ENCODE measurements at regions of chr2 and their contacts with region 1.

Region 1: GRCh38 chr2:69306822-69307578 is 80.0 kb downstream of the GFPT1 start:
- DNase-seq: peak; percentile 85 to 89 (median 87)
- ATAC-seq: peak; percentile 74
- H3K4me3 ChIP-seq: no peak overlapping the region
- H3K4me1 ChIP-seq: peaks cover 28% of the 10 kb centered on the region
- CTCF ChIP-seq: peak; percentile 51

Region 2: DNA sequence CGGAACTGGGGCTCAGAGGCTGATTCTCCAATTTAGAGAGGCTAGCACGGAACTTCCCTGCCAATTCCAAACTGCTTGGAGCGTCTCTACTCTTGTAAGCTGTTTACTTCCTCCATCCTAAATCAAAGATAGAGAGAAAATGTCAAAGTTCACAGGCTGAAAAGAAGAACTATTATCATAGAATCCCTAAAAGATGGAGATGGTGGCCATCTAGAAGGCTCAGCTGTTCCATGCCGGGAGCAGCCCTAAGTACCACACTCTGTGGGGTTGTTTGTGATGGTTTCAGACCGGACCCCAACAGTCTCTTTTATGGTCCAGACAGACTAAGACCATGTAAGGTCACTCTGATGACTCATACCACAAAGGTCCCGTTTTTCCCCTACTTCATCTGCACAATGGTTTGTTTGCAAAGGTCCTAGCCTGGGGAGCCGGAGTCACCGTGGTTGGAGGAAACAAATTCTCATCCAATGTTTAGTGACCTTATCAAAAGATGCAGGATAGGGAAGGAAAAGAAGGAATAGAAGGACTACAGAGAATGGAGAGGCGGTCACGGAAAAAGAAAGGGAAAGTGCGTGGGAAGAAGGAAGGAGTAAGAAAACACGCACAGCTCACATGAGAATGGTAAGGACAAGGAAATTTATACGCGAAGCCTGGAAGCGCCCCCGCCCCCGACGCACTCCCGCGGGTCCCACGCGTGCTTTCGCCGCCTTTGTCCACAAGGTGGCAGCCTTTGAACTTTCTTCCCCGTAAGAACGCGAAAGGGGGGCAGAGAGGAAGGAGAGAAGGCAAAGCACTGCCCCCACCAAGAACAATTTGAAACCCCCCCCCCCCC is 294.5 kb before region 1 on chr2:
- intact Hi-C with region 1: loop called in 1 of 2 experiments (anchors 5 kb)
- DNase-seq: peak; percentile 55 to 74 (median 70)
- ATAC-seq: peak; percentile 61
- H3K4me3 ChIP-seq: no peak overlapping the region
- H3K4me1 ChIP-seq: peaks cover 5% of the 10 kb centered on the region
- CTCF ChIP-seq: peak; percentile 38

Region 3: DNA sequence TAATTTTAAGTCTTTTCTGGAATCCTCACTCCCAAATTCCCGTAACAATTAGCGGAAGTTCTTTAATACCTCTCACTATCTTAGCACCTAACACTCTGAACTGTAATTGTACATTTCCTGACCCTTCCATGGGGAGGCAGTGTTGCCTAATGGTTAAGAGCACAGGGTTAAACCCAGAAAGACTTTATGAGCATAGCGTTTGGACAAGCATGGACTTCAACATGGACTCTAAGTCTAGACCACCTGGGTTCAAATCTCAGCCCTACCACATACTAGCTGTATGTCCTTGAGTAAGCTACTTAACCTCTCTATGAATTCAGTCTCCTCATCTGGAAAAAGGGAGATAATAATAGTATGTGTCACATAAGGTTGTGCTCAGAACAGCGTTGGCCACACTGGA is 281.0 kb before region 1 on chr2:
- intact Hi-C with region 1: loop called in 1 of 2 experiments (anchors 5 kb)
- DNase-seq: peak in 1 of 3 donors; percentile 74
- ATAC-seq: peak; percentile 86
- H3K4me3 ChIP-seq: no peak overlapping the region
- H3K4me1 ChIP-seq: peaks cover 4% of the 10 kb centered on the region
- CTCF ChIP-seq: peak; percentile 50

Region 4: GRCh38 chr2:69242651-69243051 is 64.3 kb before region 1 on chr2:
- intact Hi-C with region 1: loop called in 1 of 2 experiments (anchors 10 kb)
- DNase-seq: no peak
- ATAC-seq: peak; percentile 60
- H3K4me3 ChIP-seq: no peak overlapping the region
- H3K4me1 ChIP-seq: no peaks in the 10 kb centered on the region
- CTCF ChIP-seq: no peak

Region 5: DNA sequence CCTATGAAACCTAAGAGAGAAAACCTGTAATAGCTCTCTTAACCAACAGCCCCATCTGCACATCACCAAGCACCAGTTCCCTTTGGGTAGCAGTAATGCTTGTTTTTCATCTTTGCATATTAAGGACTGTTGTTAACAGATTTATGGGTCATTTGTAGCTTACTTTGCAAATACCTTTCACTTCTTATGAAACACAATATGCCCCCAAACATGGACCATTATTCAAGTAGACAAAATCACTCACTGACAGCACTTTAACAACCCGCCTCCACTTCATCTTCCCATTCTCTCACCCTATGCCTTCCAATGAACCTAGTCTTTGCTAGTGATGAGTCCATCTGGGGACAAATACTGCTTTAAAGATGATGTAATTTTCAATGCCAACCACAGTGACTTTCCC is 15.6 kb after region 1 on chr2:
- intact Hi-C with region 1: no loop called
- DNase-seq: no peak
- ATAC-seq: no peak
- H3K4me3 ChIP-seq: no peak overlapping the region
- H3K4me1 ChIP-seq: no peaks in the 10 kb centered on the region
- CTCF ChIP-seq: no peak

Measured in mucosa of descending colon (tissue), 3 donors.